ENCODE measurements at regions of chr7 and their contacts with region 1.

Region 1: DNA sequence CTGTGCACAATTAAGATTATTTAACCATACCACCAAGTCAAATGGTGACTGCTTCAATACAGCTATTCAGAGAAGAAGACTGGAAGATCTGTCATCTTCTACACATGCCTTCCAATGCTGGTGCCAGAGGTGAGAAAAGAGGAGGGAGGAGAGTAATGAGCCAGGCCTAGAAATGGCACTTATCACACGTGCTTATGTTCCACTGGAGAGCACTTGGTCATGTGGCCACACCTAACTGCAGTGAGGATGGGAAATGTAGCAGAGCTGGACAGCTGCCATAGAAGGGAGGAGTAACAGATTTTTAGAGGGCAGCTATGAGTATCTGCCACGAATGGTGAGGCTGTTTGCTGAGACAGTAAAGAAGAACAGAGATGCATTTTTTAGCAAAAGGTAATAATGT is 77.1 kb downstream of the MPLKIP start:
- DNase-seq: no peak
- H3K4me3 Mint-ChIP-seq: no peak overlapping the region
- H3K27ac Mint-ChIP-seq: no peak overlapping the region
- H3K4me1 Mint-ChIP-seq: peaks cover 12% of the 10 kb centered on the region
- H3K27me3 Mint-ChIP-seq: no peaks in the 10 kb centered on the region
- CTCF ChIP-seq: no peak

Region 2: GRCh38 chr7:39948956-39949928 is 108.0 kb before region 1 on chr7:
- CTCF ChIA-PET with region 1: interaction called, 19 read pairs
- intact Hi-C with region 1: loop called (anchors 1 kb)
- DNase-seq: peak; percentile 99
- H3K4me3 Mint-ChIP-seq: peak overlapping the region; percentile 87
- H3K27ac Mint-ChIP-seq: peak overlapping the region; percentile 84
- H3K4me1 Mint-ChIP-seq: peaks cover 11% of the 10 kb centered on the region
- H3K27me3 Mint-ChIP-seq: no peaks in the 10 kb centered on the region
- CTCF ChIP-seq: peak; percentile 21

Region 3: DNA sequence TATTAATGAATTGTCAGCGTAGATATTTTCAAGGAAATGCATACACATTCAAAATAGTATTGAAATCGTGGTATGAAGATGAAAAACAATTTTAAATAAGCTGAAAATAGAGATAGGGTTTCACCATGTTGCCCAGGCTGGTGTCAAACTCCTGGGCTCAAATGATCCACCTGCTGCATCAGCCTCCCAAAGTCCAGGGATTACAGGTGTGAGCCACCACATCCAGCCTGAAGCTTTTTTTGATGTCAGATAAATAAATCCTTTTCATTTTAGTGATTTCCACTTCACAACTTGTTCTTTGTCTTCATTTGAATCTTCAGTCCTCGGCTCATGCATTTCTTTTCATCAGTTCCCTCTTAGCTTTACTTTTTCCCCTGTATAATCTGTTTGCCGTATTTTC is 102.6 kb before region 1 on chr7:
- CTCF ChIA-PET with region 1: interaction called, 19 read pairs
- intact Hi-C with region 1: loop called (anchors 1 kb)
- DNase-seq: no peak
- H3K4me3 Mint-ChIP-seq: peak overlapping the region; percentile 87
- H3K27ac Mint-ChIP-seq: peak overlapping the region; percentile 25
- H3K4me1 Mint-ChIP-seq: peaks cover 43% of the 10 kb centered on the region
- H3K27me3 Mint-ChIP-seq: no peaks in the 10 kb centered on the region
- CTCF ChIP-seq: no peak